ENCODE measurements at regions of chr6 and their contacts with region 1.

Region 1: GRCh38 chr6:137415127-137415833 is 78.9 kb downstream of the OLIG3 start:
- DNase-seq: peak; percentile 45 to 86 (median 63)
- ATAC-seq: peak; percentile 86
- H3K4me3 ChIP-seq: peak overlapping the region; percentile 61 to 63
- H3K4me3 Mint-ChIP-seq: peak overlapping the region; percentile 83
- H3K27ac ChIP-seq: peak overlapping the region; percentile 31 to 84
- H3K27ac Mint-ChIP-seq: peak overlapping the region; percentile 83
- H3K4me1 ChIP-seq: peaks cover 8% of the 10 kb centered on the region
- H3K4me1 Mint-ChIP-seq: peaks cover 14% of the 10 kb centered on the region
- H3K27me3 ChIP-seq: no peaks in the 10 kb centered on the region
- H3K27me3 Mint-ChIP-seq: no peaks in the 10 kb centered on the region
- CTCF ChIP-seq: peak; percentile 54

Region 2: GRCh38 chr6:137094411-137095008 is 320.8 kb before region 1 on chr6:
- CTCF ChIA-PET with region 1: interaction called, 9 read pairs
- POLR2A ChIA-PET with region 1: interaction called, 4 read pairs
- intact Hi-C with region 1: loop called (anchors 1 to 2 kb)
- DNase-seq: peak; percentile 14 to 79 (median 54)
- ATAC-seq: peak; percentile 67
- H3K4me3 ChIP-seq: no peak overlapping the region
- H3K4me3 Mint-ChIP-seq: no peak overlapping the region
- H3K27ac ChIP-seq: no peak overlapping the region
- H3K27ac Mint-ChIP-seq: peak overlapping the region; percentile 37
- H3K4me1 ChIP-seq: no peaks in the 10 kb centered on the region
- H3K4me1 Mint-ChIP-seq: peaks cover 18% of the 10 kb centered on the region
- H3K27me3 ChIP-seq: no peaks in the 10 kb centered on the region
- H3K27me3 Mint-ChIP-seq: peaks cover 3% of the 10 kb centered on the region
- CTCF ChIP-seq: peak; percentile 71

Region 3: GRCh38 chr6:137210903-137211302 is 204.4 kb before region 1 on chr6:
- CTCF ChIA-PET with region 1: no interaction called
- POLR2A ChIA-PET with region 1: no interaction called
- intact Hi-C with region 1: no loop called
- DNase-seq: no peak
- ATAC-seq: no peak
- H3K4me3 ChIP-seq: no peak overlapping the region
- H3K4me3 Mint-ChIP-seq: no peak overlapping the region
- H3K27ac ChIP-seq: no peak overlapping the region
- H3K27ac Mint-ChIP-seq: peak overlapping the region; percentile 70
- H3K4me1 ChIP-seq: peaks cover 6% of the 10 kb centered on the region
- H3K4me1 Mint-ChIP-seq: peaks cover 66% of the 10 kb centered on the region
- H3K27me3 ChIP-seq: no peaks in the 10 kb centered on the region
- H3K27me3 Mint-ChIP-seq: no peaks in the 10 kb centered on the region
- CTCF ChIP-seq: no peak

Region 4: GRCh38 chr6:137313928-137314855 is 101.1 kb before region 1 on chr6:
- CTCF ChIA-PET with region 1: interaction called, 18 read pairs
- POLR2A ChIA-PET with region 1: no interaction called
- intact Hi-C with region 1: no loop called
- DNase-seq: peak; percentile 43 to 84 (median 73)
- ATAC-seq: peak; percentile 73
- H3K4me3 ChIP-seq: no peak overlapping the region
- H3K4me3 Mint-ChIP-seq: no peak overlapping the region
- H3K27ac ChIP-seq: no peak overlapping the region
- H3K27ac Mint-ChIP-seq: no peak overlapping the region
- H3K4me1 ChIP-seq: no peaks in the 10 kb centered on the region
- H3K4me1 Mint-ChIP-seq: peaks cover 8% of the 10 kb centered on the region
- H3K27me3 ChIP-seq: no peaks in the 10 kb centered on the region
- H3K27me3 Mint-ChIP-seq: no peaks in the 10 kb centered on the region
- CTCF ChIP-seq: peak; percentile 73

Region 5: DNA sequence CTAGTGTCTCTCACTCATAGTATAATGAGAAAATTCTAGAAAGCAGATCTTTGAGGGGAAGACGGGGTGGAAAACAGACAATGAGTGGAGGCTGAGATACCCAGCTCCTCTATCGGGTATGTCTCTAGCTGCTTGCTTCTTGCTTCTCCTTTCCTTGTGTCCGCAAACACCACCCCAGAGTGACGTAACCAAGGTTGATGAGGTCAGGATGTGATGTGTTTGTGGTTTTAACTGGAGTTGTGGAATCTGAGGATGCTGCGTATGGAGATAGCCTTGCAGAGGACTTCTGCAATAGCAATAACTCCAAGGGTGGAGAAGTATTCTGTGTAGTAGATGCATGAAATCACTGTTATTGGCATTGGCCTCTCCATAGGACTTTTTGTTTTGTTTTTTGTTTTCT is 63.4 kb before region 1 on chr6:
- CTCF ChIA-PET with region 1: interaction called, 210 read pairs
- POLR2A ChIA-PET with region 1: interaction called, 5 read pairs
- intact Hi-C with region 1: no loop called
- DNase-seq: peak in 1 of 9 experiments; percentile 34
- ATAC-seq: no peak
- H3K4me3 ChIP-seq: no peak overlapping the region
- H3K4me3 Mint-ChIP-seq: no peak overlapping the region
- H3K27ac ChIP-seq: no peak overlapping the region
- H3K27ac Mint-ChIP-seq: no peak overlapping the region
- H3K4me1 ChIP-seq: peaks cover 15% of the 10 kb centered on the region
- H3K4me1 Mint-ChIP-seq: peaks cover 21% of the 10 kb centered on the region
- H3K27me3 ChIP-seq: no peaks in the 10 kb centered on the region
- H3K27me3 Mint-ChIP-seq: peaks cover 2% of the 10 kb centered on the region
- CTCF ChIP-seq: no peak

Region 6: DNA sequence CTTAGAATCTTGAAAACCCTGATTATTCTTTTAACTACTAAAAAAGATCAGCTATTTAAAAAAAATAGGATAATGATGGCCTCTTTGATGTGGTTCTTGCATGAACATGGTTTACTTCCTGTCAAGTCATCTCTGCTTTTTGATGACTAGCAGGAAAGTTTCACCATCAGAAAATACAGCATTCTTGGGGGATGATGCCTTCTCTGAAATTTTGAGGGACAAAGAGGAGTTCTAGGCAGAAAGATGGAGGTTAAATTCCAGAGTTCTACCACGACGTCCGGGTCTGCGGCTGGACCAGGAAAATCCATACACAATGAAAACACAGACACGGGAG is 51.5 kb before region 1 on chr6:
- CTCF ChIA-PET with region 1: interaction called, 25 read pairs
- POLR2A ChIA-PET with region 1: interaction called, 3 read pairs
- intact Hi-C with region 1: no loop called
- DNase-seq: peak in 2 of 9 experiments; percentile 50 to 68
- ATAC-seq: peak; percentile 49
- H3K4me3 ChIP-seq: no peak overlapping the region
- H3K4me3 Mint-ChIP-seq: no peak overlapping the region
- H3K27ac ChIP-seq: peak overlapping the region in 1 of 2 experiments; percentile 9
- H3K27ac Mint-ChIP-seq: no peak overlapping the region
- H3K4me1 ChIP-seq: peaks cover 15% of the 10 kb centered on the region
- H3K4me1 Mint-ChIP-seq: peaks cover 26% of the 10 kb centered on the region
- H3K27me3 ChIP-seq: no peaks in the 10 kb centered on the region
- H3K27me3 Mint-ChIP-seq: no peaks in the 10 kb centered on the region
- CTCF ChIP-seq: no peak

Region 7: DNA sequence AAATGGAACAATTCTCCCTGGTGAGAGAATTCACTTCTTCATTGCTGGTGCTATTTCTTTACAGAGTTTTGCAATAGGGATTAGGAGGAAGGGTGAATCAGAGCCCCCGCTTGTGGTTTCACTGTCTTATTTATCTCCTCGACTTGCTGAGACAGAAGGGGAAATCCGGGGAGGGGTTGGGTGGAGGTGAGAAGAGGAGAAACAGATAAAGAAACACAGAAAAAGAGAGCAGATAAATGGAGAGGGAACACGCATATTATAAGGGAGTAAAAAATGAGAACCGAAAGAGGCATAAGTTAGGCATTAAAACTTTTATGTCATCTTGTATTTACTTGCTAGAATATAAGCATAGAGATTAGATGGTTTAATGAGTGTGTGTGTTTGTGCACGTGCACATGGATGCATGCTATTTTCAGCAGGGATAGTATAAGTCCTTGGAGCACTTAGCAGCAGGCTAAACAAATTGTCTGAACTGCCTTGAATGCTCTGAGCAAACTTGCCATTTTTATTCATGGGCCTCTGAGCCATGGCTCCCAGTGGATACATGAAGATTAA is 26.1 kb before region 1 on chr6:
- CTCF ChIA-PET with region 1: interaction called, 9 read pairs
- POLR2A ChIA-PET with region 1: interaction called, 5 read pairs
- intact Hi-C with region 1: loop called in 1 of 2 experiments (anchors 1 kb)
- DNase-seq: peak; percentile 12 to 91 (median 75)
- ATAC-seq: peak; percentile 96
- H3K4me3 ChIP-seq: no peak overlapping the region
- H3K4me3 Mint-ChIP-seq: peak overlapping the region; percentile 67
- H3K27ac ChIP-seq: peak overlapping the region; percentile 4 to 79
- H3K27ac Mint-ChIP-seq: peak overlapping the region; percentile 84
- H3K4me1 ChIP-seq: peaks cover 35% of the 10 kb centered on the region
- H3K4me1 Mint-ChIP-seq: peaks cover 74% of the 10 kb centered on the region
- H3K27me3 ChIP-seq: no peaks in the 10 kb centered on the region
- H3K27me3 Mint-ChIP-seq: no peaks in the 10 kb centered on the region
- CTCF ChIP-seq: no peak

Region 8: DNA sequence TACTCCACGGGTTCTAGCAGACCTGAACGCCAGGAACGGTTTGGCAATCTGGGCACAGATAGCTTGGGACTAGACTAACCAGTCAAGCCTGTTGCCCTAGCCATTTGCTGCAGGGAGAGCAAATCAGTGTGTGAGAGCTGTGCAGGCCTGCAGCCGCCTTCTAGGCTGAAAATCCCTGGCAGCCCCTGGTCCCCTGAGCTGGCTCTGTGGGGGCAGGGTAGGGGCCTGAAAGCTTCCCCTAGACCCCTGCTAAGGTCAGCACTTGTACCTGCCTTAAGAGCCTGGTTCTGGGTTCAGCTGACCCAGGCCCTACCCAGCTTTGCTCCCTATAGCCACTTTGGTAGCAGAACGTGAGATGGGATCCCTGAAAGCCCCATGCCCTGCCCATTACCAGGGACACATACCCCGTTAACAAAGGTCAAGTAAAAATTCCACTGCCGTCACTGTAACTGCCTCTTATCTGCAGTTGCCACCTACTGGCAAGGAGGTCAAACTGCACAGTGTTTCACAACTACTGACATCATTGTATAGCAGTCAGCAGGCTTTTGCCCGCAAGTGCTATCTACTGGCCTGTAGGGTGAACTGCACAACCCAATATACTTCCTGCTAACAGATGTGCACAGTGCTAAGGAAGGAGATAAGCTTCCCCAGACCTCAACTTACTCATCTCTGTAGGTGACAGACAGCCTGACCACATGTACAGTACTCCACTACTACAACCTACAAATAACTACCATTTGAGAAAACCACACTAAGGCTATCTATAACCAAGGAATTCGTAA is 174.0 kb after region 1 on chr6:
- CTCF ChIA-PET with region 1: interaction called, 16 read pairs
- POLR2A ChIA-PET with region 1: no interaction called
- intact Hi-C with region 1: loop called in 1 of 2 experiments (anchors 5 kb)
- DNase-seq: peak in 8 of 9 experiments; percentile 26 to 86 (median 58)
- ATAC-seq: peak; percentile 99
- H3K4me3 ChIP-seq: no peak overlapping the region
- H3K4me3 Mint-ChIP-seq: no peak overlapping the region
- H3K27ac ChIP-seq: no peak overlapping the region
- H3K27ac Mint-ChIP-seq: peak overlapping the region; percentile 0
- H3K4me1 ChIP-seq: peaks cover 9% of the 10 kb centered on the region
- H3K4me1 Mint-ChIP-seq: peaks cover 16% of the 10 kb centered on the region
- H3K27me3 ChIP-seq: no peaks in the 10 kb centered on the region
- H3K27me3 Mint-ChIP-seq: peaks cover 7% of the 10 kb centered on the region
- CTCF ChIP-seq: peak; percentile 61

Region 9: GRCh38 chr6:137767911-137768690 is 352.8 kb after region 1 on chr6:
- CTCF ChIA-PET with region 1: no interaction called
- POLR2A ChIA-PET with region 1: no interaction called
- intact Hi-C with region 1: no loop called
- DNase-seq: peak in 2 of 9 experiments; percentile 33 to 56
- ATAC-seq: peak; percentile 56
- H3K4me3 ChIP-seq: no peak overlapping the region
- H3K4me3 Mint-ChIP-seq: peak overlapping the region; percentile 70
- H3K27ac ChIP-seq: peak overlapping the region in 1 of 2 experiments; percentile 58
- H3K27ac Mint-ChIP-seq: peak overlapping the region; percentile 94
- H3K4me1 ChIP-seq: peaks cover 14% of the 10 kb centered on the region
- H3K4me1 Mint-ChIP-seq: peaks cover 18% of the 10 kb centered on the region
- H3K27me3 ChIP-seq: no peaks in the 10 kb centered on the region
- H3K27me3 Mint-ChIP-seq: no peaks in the 10 kb centered on the region
- CTCF ChIP-seq: no peak

Measured in CD8-positive, alpha-beta T cell (primary cell).